ENCODE measurements at regions of chr15 and their contacts with region 1.

Region 1: GRCh38 chr15:34101366-34102175 is at the starts of genes EMC7 and PGBD4:
- DNase-seq: peak; percentile 98
- ATAC-seq: peak; percentile 98
- H3K4me3 Mint-ChIP-seq: peak within 1 kb of the TSS; percentile 99
- H3K27ac Mint-ChIP-seq: peak within 1 kb of the TSS; percentile 98
- H3K4me1 Mint-ChIP-seq: peaks cover 43% of the 10 kb centered on the region
- H3K27me3 Mint-ChIP-seq: no peaks in the 10 kb centered on the region
- CTCF ChIP-seq: no peak
- total RNA-seq, gene EMC7: 29.8 and 31.9 TPM in 2 replicates
- total RNA-seq, gene PGBD4: 4.8 and 5.3 TPM in 2 replicates

Region 2: DNA sequence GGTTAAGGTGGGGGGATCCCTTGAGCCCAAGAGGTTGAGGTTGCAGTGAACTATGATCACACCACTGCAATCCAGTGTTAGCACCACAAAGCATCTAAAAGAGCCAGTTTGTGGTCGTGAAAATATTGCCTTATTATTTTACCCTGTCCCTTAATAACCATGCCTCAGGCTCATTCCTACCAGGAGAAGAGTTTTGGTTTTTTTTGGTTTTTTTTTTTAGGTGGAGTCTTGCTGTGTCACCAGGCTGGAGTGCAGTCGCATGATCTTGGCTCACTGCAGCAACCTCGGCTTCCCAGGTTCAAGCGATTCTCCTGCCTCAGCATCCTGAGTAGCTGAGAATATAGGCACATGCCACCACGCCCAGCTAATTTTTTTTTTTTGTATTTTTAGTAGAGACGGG is 44.6 kb before region 1 on chr15:
- CTCF ChIA-PET with region 1: no interaction called
- POLR2A ChIA-PET with region 1: no interaction called
- intact Hi-C with region 1: loop called (anchors 2 kb)
- DNase-seq: no peak
- ATAC-seq: no peak
- H3K4me3 Mint-ChIP-seq: no peak overlapping the region
- H3K27ac Mint-ChIP-seq: no peak overlapping the region
- H3K4me1 Mint-ChIP-seq: peaks cover 4% of the 10 kb centered on the region
- H3K27me3 Mint-ChIP-seq: no peaks in the 10 kb centered on the region
- CTCF ChIP-seq: no peak

Region 3: DNA sequence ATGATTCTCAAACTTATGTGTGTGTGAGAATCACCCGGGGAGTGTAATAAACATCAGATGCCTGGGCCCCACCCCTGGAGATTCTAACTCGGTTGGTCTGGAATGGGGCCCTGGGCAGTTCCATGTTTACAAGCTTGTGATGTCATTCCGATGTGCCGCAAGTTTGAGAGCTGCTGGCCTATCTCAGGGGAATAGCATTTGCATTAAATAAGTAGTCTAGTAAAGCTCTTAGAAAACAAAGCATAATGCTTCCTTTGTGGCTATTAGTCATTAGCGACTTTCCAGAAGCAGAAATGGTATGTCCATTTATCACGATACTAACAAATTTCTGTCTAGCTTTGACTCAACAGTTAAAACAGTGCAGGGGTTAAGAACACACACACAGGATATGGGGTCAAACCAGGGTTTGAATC is 21.2 kb after region 1 on chr15:
- CTCF ChIA-PET with region 1: no interaction called
- POLR2A ChIA-PET with region 1: no interaction called
- intact Hi-C with region 1: no loop called
- DNase-seq: no peak
- ATAC-seq: no peak
- H3K4me3 Mint-ChIP-seq: no peak overlapping the region
- H3K27ac Mint-ChIP-seq: no peak overlapping the region
- H3K4me1 Mint-ChIP-seq: no peaks in the 10 kb centered on the region
- H3K27me3 Mint-ChIP-seq: peaks cover 16% of the 10 kb centered on the region
- CTCF ChIP-seq: no peak

Region 4: GRCh38 chr15:34209421-34210282 is 108.1 kb after region 1 on chr15 and contains the start of gene KATNBL1:
- CTCF ChIA-PET with region 1: interaction called, 7 read pairs
- POLR2A ChIA-PET with region 1: interaction called, 19 read pairs
- intact Hi-C with region 1: loop called (anchors 1 kb)
- DNase-seq: peak; percentile 97
- ATAC-seq: peak; percentile 93
- H3K4me3 Mint-ChIP-seq: peak within 1 kb of the TSS; percentile 89
- H3K27ac Mint-ChIP-seq: peak within 1 kb of the TSS; percentile 82
- H3K4me1 Mint-ChIP-seq: peaks cover 15% of the 10 kb centered on the region
- H3K27me3 Mint-ChIP-seq: no peaks in the 10 kb centered on the region
- CTCF ChIP-seq: no peak
- total RNA-seq, gene KATNBL1: 46.2 and 53.3 TPM in 2 replicates

Region 5: GRCh38 chr15:34342737-34343575 is 241.4 kb after region 1 on chr15 and contains the starts of genes NOP10 and NUTM1:
- CTCF ChIA-PET with region 1: no interaction called
- POLR2A ChIA-PET with region 1: interaction called, 5 read pairs
- intact Hi-C with region 1: loop called (anchors 2 kb)
- DNase-seq: peak; percentile 89
- ATAC-seq: peak; percentile 90
- H3K4me3 Mint-ChIP-seq: no peak within 1 kb of the TSS
- H3K27ac Mint-ChIP-seq: peak within 1 kb of the TSS; percentile 74
- H3K4me1 Mint-ChIP-seq: peaks cover 25% of the 10 kb centered on the region
- H3K27me3 Mint-ChIP-seq: no peaks in the 10 kb centered on the region
- CTCF ChIP-seq: peak; percentile 57
- total RNA-seq, gene NOP10: 116 and 130 TPM in 2 replicates
- total RNA-seq, gene NUTM1: not detected in 2 replicates

Region 6: GRCh38 chr15:34987985-34988873 is 886.7 kb after region 1 on chr15 and contains the start of gene ZNF770:
- CTCF ChIA-PET with region 1: no interaction called
- POLR2A ChIA-PET with region 1: interaction called, 8 read pairs
- intact Hi-C with region 1: loop called (anchors 1 kb)
- DNase-seq: peak; percentile 92
- ATAC-seq: peak; percentile 85
- H3K4me3 Mint-ChIP-seq: peak within 1 kb of the TSS; percentile 98
- H3K27ac Mint-ChIP-seq: peak within 1 kb of the TSS; percentile 98
- H3K4me1 Mint-ChIP-seq: peaks cover 37% of the 10 kb centered on the region
- H3K27me3 Mint-ChIP-seq: no peaks in the 10 kb centered on the region
- CTCF ChIP-seq: no peak
- total RNA-seq, gene ZNF770: 46.8 TPM in 2 replicates